Mammary epithelial cell (primary cell): ENCODE measurements at regions of chr3 and their contacts with region 1.

Region 1: DNA sequence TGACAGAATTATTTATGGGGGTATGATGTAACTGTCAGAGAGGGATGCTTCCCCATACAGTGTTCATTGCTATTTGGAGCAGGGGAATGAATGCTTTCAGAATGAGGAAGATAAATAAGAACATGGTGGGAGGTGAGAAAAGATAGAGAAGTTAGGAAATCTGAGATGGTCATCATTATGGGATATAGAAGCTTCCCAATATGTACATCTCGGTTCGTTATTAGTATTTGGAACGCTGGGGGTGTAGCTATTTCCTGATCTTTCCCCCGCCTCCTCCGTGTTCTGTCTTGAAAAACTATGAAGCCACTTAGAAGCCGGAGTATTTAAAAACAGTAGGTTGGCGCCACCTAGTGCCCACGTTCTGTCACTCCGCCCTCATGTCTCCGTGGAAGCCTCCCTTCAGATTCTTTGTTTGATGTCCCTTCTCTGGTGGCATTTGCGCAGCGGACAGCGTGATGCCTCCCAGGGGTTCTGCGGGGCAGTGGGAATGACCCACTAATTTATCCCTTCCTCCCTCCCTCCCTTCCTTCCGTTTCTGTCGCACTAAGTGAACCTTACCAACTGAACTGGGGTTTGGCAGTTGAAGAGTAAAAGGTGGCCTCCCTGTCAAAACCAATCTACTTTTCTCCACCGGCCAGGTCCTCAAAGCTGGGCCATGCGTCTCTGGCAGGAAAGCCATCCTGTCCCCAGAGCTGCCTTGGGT is 184.5 kb downstream of the FEZF2 start:
- DNase-seq: peak; percentile 45
- H3K4me3 ChIP-seq: no peak overlapping the region
- H3K27ac ChIP-seq: no peak overlapping the region
- H3K4me1 ChIP-seq: no peaks in the 10 kb centered on the region
- H3K27me3 ChIP-seq: no peaks in the 10 kb centered on the region
- CTCF ChIP-seq: peak; percentile 67 to 77

Region 2: GRCh38 chr3:61251174-61251972 is 937.5 kb before region 1 on chr3 and contains the start of gene FHIT:
- CTCF ChIA-PET with region 1: no interaction called
- dilution Hi-C with region 1: no loop called
- in situ Hi-C with region 1: no loop called
- intact Hi-C with region 1: loop called (anchors 5 kb)
- DNase-seq: peak; percentile 86
- H3K4me3 ChIP-seq: peak within 1 kb of the TSS; percentile 65 to 74 (median 69)
- H3K27ac ChIP-seq: peak within 1 kb of the TSS; percentile 31
- H3K4me1 ChIP-seq: peaks cover 13% of the 10 kb centered on the region
- H3K27me3 ChIP-seq: peaks cover 2% of the 10 kb centered on the region
- CTCF ChIP-seq: no peak
- total RNA-seq, gene FHIT: 5.4 to 6.3 TPM

Region 3: DNA sequence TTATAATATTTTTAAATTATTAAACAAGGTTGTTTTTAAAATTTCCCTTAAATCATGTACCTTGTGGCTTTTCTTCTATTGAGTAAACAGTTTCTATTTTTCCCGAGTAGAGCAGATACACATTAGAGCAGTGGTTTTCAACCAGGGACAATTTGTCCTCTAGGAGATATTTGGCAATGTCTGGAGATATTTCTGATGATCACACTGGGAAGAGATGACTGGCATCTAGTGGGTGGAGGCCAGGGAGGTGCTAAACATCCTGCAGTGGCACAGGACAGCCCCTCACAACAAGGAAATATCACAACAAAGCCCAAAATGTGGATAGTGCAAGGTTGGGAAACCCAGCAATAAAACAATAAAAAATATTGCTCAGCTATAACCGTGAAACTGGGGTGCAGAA is 740.5 kb before region 1 on chr3:
- CTCF ChIA-PET with region 1: no interaction called
- dilution Hi-C with region 1: no loop called
- in situ Hi-C with region 1: no loop called
- intact Hi-C with region 1: loop called (anchors 10 kb)
- DNase-seq: no peak
- H3K4me3 ChIP-seq: no peak overlapping the region
- H3K27ac ChIP-seq: no peak overlapping the region
- H3K4me1 ChIP-seq: no peaks in the 10 kb centered on the region
- H3K27me3 ChIP-seq: no peaks in the 10 kb centered on the region
- CTCF ChIP-seq: no peak

Region 4: DNA sequence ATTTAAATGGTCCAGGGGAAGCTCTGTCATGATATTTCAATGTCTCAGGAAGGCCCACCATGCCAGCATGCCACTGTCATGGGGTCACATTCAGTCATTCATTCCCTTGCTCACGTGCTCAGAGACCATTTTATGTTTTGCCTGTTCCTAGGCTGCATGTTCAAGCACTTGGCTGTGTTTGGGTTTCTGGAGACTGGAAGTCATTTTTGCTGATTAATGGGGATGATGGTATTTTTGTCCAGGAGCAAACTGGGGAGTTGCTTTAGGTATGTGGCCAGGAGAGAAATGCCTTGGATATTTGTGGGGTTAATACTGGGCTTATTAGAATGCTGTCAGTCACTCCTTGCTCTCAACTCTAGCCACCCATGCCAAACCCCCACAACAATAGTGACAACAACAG is 323.9 kb before region 1 on chr3:
- CTCF ChIA-PET with region 1: no interaction called
- dilution Hi-C with region 1: no loop called
- in situ Hi-C with region 1: loop called (anchors 10 to 25 kb)
- intact Hi-C with region 1: no loop called
- DNase-seq: peak; percentile 9
- H3K4me3 ChIP-seq: no peak overlapping the region
- H3K27ac ChIP-seq: no peak overlapping the region
- H3K4me1 ChIP-seq: no peaks in the 10 kb centered on the region
- H3K27me3 ChIP-seq: no peaks in the 10 kb centered on the region
- CTCF ChIP-seq: no peak

Region 5: GRCh38 chr3:62051507-62051906 is 137.3 kb before region 1 on chr3:
- CTCF ChIA-PET with region 1: no interaction called
- dilution Hi-C with region 1: no loop called
- in situ Hi-C with region 1: no loop called
- intact Hi-C with region 1: loop called (anchors 5 kb)
- DNase-seq: peak; percentile 23
- H3K4me3 ChIP-seq: no peak overlapping the region
- H3K27ac ChIP-seq: no peak overlapping the region
- H3K4me1 ChIP-seq: no peaks in the 10 kb centered on the region
- H3K27me3 ChIP-seq: no peaks in the 10 kb centered on the region
- CTCF ChIP-seq: peak; percentile 38 to 60

Region 6: GRCh38 chr3:62159709-62160092 is 29.1 kb before region 1 on chr3:
- CTCF ChIA-PET with region 1: no interaction called
- dilution Hi-C with region 1: no loop called
- in situ Hi-C with region 1: no loop called
- intact Hi-C with region 1: no loop called
- DNase-seq: no peak
- H3K4me3 ChIP-seq: no peak overlapping the region
- H3K27ac ChIP-seq: no peak overlapping the region
- H3K4me1 ChIP-seq: no peaks in the 10 kb centered on the region
- H3K27me3 ChIP-seq: no peaks in the 10 kb centered on the region
- CTCF ChIP-seq: no peak